Sciatic nerve (tissue), 2 donors: ENCODE measurements at regions of chr1 and their contacts with region 1.

Region 1: GRCh38 chr1:212819726-212820125 is 27.7 kb downstream of the SPATA45 start:
- DNase-seq: no peak
- ATAC-seq: no peak

Region 2: DNA sequence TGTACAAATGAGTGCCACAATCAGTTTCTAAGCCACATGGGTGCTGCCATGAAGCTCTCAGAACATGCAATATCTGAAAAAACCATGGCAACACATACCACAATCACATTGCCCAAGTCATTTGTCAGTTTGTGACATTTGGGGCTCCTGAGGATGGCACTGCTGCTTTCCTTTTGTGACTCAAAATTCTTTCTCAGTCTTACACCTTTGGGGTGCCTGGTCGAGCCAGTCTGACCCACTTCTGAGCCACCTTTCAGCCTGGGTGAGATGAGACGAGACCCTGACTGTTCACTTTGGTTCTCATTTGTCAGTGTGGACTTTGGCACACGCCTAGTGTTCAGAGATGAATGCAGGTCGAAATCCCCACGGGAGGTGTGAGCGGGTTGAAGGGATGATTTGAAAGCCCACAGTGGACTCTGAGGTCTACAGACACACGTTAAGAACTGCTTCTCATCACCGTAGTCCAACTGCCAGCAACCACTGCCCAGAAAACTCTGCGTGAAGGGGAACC is 128.1 kb before region 1 on chr1:
- intact Hi-C with region 1: no loop called
- DNase-seq: no peak
- ATAC-seq: no peak

Region 3: DNA sequence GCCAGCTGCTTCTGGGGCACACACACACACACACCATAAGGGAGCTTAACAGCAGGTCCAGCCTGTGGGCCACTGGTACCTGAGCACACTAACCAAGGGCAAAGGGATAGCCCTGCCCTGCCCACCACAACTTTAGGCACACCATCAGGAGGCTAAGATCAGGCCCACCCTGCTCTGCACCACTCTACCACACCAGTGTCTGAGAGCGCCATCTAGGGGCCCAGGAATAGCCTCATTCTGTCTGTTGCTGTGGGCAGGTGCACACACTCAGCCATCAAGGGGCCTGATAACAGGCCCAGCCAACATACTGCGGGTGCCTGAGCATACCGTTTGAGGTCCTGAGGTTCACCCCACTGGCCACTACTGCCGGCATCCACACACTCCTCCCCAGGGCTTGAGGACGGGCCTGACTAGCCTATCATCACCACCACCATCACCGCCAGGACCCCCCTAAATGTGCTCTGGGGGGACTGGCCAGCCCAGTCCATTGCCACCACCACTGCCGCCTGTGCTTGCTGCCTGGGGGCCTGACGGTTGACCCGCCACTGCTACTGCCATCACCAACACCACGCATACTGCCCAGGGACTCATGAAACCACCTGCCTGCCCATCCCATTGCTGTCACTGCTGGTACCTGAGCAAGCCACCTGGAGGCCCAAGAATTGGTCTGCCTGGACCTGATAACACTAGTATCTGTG is 59.5 kb before region 1 on chr1:
- intact Hi-C with region 1: no loop called
- DNase-seq: no peak
- ATAC-seq: no peak

Region 4: GRCh38 chr1:212884592-212884991 is 64.9 kb after region 1 on chr1:
- intact Hi-C with region 1: loop called (anchors 2 kb)
- DNase-seq: no peak
- ATAC-seq: no peak

Region 5: GRCh38 chr1:213192026-213192425 is 372.3 kb after region 1 on chr1:
- intact Hi-C with region 1: no loop called
- DNase-seq: no peak
- ATAC-seq: no peak